PC-3 (cell line): ENCODE measurements at regions of chr21 and their contacts with region 1.

Region 1: GRCh38 chr21:22609802-22610201 is 1611.6 kb downstream of the NCAM2 start:
- DNase-seq: no peak
- ATAC-seq: no peak
- H3K4me3 ChIP-seq: no peak overlapping the region
- H3K27ac ChIP-seq: no peak overlapping the region
- H3K4me1 ChIP-seq: no peaks in the 10 kb centered on the region
- H3K27me3 ChIP-seq: no peaks in the 10 kb centered on the region
- CTCF ChIP-seq: no peak

Region 2: GRCh38 chr21:22438428-22439086 is 171.2 kb before region 1 on chr21:
- CTCF ChIA-PET with region 1: no interaction called
- POLR2A ChIA-PET with region 1: interaction called, 37 read pairs
- intact Hi-C with region 1: no loop called
- DNase-seq: no peak
- ATAC-seq: no peak
- H3K4me3 ChIP-seq: 0 out of 2 replicates have a peak overlapping the region, but pooled peaks have one; percentile 7
- H3K27ac ChIP-seq: no peak overlapping the region
- H3K4me1 ChIP-seq: no peaks in the 10 kb centered on the region
- H3K27me3 ChIP-seq: no peaks in the 10 kb centered on the region
- CTCF ChIP-seq: peak; percentile 25; the same call in 1 of the 2 replicates